ENCODE measurements at regions of chr10 and their contacts with region 1.

Region 1: DNA sequence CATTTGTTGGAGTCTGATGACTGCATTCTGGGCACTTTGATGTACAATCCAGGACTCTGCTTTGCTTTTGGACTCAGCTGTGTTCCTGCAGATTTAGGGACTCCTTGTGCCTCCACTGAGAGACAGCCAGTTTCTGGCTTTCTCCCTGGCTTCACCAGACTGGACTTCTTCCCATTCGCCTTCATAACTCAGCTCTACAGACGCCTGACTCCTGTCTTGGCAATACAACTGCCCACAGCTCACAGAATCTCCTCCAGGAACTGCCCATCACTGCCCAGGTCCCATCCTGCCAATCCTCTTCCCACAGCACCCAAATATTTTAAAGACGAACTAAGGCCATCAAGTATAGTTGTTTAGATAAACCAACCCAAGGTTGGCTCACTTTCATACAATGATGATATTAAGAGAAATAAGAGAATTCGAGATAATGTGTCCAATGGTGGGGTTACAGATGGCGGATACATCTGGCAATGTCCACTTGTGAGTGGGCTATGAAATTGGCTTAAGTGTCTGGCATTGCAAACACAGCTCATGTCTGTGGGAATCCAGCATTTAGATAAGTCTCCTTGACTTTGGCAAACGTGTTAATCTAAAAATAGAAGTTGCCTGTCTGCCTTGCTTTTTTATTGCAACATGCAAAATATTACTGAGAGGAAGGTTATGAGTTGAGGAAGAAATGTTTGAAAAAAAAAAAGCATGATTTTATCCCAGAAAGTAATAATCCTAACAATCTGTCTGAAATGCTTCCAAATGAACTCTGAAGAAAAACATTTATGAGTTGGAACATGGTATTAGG is 95.1 kb downstream of the ITGA8 start:
- DNase-seq: no peak
- H3K4me3 ChIP-seq: no peak overlapping the region
- H3K27ac ChIP-seq: no peak overlapping the region
- H3K4me1 ChIP-seq: peaks cover 11% of the 10 kb centered on the region
- H3K27me3 ChIP-seq: no peaks in the 10 kb centered on the region
- CTCF ChIP-seq: no peak
- POLR2A ChIP-seq: no peak

Region 2: GRCh38 chr10:15200626-15201025 is 424.0 kb before region 1 on chr10:
- CTCF ChIA-PET with region 1: no interaction called
- POLR2A ChIA-PET with region 1: no interaction called
- dilution Hi-C with region 1: no loop called
- intact Hi-C with region 1: no loop called
- DNase-seq: peak; percentile 94
- H3K4me3 ChIP-seq: no peak overlapping the region
- H3K27ac ChIP-seq: peak overlapping the region; percentile 100
- H3K4me1 ChIP-seq: peaks cover 70% of the 10 kb centered on the region
- H3K27me3 ChIP-seq: no peaks in the 10 kb centered on the region
- CTCF ChIP-seq: no peak
- POLR2A ChIP-seq: peak; percentile 82

Region 3: GRCh38 chr10:15609246-15609645 is 15.4 kb before region 1 on chr10:
- CTCF ChIA-PET with region 1: no interaction called
- POLR2A ChIA-PET with region 1: no interaction called
- dilution Hi-C with region 1: no loop called
- intact Hi-C with region 1: loop called (anchors 2 kb)
- DNase-seq: peak; percentile 6
- H3K4me3 ChIP-seq: no peak overlapping the region
- H3K27ac ChIP-seq: no peak overlapping the region
- H3K4me1 ChIP-seq: peaks cover 6% of the 10 kb centered on the region
- H3K27me3 ChIP-seq: peaks cover 1 to 12% of the 10 kb centered on the region in 2 experiments
- CTCF ChIP-seq: no peak
- POLR2A ChIP-seq: no peak